ENCODE measurements at regions of chr13 and their contacts with region 1.

Region 1: GRCh38 chr13:99033814-99034213 is 56.0 kb upstream of the DOCK9 start:
- DNase-seq: peak; percentile 59
- H3K4me3 ChIP-seq: no peak overlapping the region
- H3K27ac ChIP-seq: no peak overlapping the region
- H3K4me1 ChIP-seq: peaks cover 8% of the 10 kb centered on the region
- H3K27me3 ChIP-seq: no peaks in the 10 kb centered on the region
- CTCF ChIP-seq: peak; percentile 29 to 38
- POLR2A ChIP-seq: no peak

Region 2: GRCh38 chr13:98267080-98267912 is 766.5 kb before region 1 on chr13:
- CTCF ChIA-PET with region 1: no interaction called
- POLR2A ChIA-PET with region 1: no interaction called
- dilution Hi-C with region 1: no loop called
- intact Hi-C with region 1: no loop called
- DNase-seq: peak; percentile 50
- H3K4me3 ChIP-seq: no peak overlapping the region
- H3K27ac ChIP-seq: no peak overlapping the region
- H3K4me1 ChIP-seq: peaks cover 6% of the 10 kb centered on the region
- H3K27me3 ChIP-seq: no peaks in the 10 kb centered on the region
- CTCF ChIP-seq: no peak
- POLR2A ChIP-seq: no peak

Region 3: DNA sequence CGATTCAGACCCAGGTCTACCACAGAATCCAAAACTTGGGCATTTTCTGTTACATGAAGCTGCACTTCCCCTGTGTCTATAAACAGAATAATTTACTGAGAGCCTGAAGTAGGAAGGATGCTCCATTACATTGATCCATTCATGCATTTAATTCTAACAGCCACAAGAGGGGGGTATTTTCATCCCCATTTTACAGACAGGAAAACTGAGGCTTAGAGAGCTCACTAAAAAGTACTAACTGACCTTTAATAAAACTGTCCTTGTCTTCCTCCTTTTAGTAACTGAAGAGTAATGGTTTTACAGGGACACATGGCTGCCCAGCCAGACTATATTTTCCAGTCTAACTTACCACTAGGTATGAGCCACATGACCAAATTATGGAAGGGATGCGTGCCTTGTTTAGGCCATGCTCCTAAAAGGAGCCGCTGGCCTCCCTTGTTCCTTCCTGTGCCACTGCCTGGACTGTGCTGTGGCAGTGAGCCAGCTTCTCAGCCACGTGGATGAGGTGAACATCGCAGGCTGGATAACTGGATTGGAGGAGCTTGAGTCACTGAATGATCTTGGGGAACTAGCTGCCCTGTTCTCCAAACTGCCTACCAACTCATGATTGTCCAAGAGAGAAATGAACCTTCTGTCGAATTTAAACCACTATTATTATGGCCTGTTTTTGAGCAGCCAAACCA is 164.3 kb before region 1 on chr13:
- CTCF ChIA-PET with region 1: interaction called, 15 read pairs
- POLR2A ChIA-PET with region 1: no interaction called
- dilution Hi-C with region 1: no loop called
- intact Hi-C with region 1: loop called (anchors 1 kb)
- DNase-seq: peak; percentile 79
- H3K4me3 ChIP-seq: no peak overlapping the region
- H3K27ac ChIP-seq: no peak overlapping the region
- H3K4me1 ChIP-seq: no peaks in the 10 kb centered on the region
- H3K27me3 ChIP-seq: no peaks in the 10 kb centered on the region
- CTCF ChIP-seq: peak in 1 of 2 donors; percentile 14
- POLR2A ChIP-seq: no peak

Region 4: GRCh38 chr13:98890186-98890585 is 143.6 kb before region 1 on chr13:
- CTCF ChIA-PET with region 1: interaction called, 18 read pairs
- POLR2A ChIA-PET with region 1: no interaction called
- dilution Hi-C with region 1: no loop called
- intact Hi-C with region 1: loop called (anchors 5 kb)
- DNase-seq: peak; percentile 47
- H3K4me3 ChIP-seq: no peak overlapping the region
- H3K27ac ChIP-seq: peak overlapping the region; percentile 1
- H3K4me1 ChIP-seq: peaks cover 51% of the 10 kb centered on the region
- H3K27me3 ChIP-seq: no peaks in the 10 kb centered on the region
- CTCF ChIP-seq: no peak
- POLR2A ChIP-seq: no peak

Region 5: GRCh38 chr13:98972627-98973026 is 61.2 kb before region 1 on chr13:
- CTCF ChIA-PET with region 1: interaction called, 37 read pairs
- POLR2A ChIA-PET with region 1: interaction called, 3 read pairs
- dilution Hi-C with region 1: no loop called
- intact Hi-C with region 1: loop called (anchors 1 kb)
- DNase-seq: peak; percentile 93
- H3K4me3 ChIP-seq: peak overlapping the region in 1 of 3 experiments; percentile 10
- H3K27ac ChIP-seq: peak overlapping the region; percentile 97
- H3K4me1 ChIP-seq: peaks cover 66% of the 10 kb centered on the region
- H3K27me3 ChIP-seq: no peaks in the 10 kb centered on the region
- CTCF ChIP-seq: no peak
- POLR2A ChIP-seq: peak; percentile 60